ENCODE measurements at regions of chr10 and their contacts with region 1.

Region 1: DNA sequence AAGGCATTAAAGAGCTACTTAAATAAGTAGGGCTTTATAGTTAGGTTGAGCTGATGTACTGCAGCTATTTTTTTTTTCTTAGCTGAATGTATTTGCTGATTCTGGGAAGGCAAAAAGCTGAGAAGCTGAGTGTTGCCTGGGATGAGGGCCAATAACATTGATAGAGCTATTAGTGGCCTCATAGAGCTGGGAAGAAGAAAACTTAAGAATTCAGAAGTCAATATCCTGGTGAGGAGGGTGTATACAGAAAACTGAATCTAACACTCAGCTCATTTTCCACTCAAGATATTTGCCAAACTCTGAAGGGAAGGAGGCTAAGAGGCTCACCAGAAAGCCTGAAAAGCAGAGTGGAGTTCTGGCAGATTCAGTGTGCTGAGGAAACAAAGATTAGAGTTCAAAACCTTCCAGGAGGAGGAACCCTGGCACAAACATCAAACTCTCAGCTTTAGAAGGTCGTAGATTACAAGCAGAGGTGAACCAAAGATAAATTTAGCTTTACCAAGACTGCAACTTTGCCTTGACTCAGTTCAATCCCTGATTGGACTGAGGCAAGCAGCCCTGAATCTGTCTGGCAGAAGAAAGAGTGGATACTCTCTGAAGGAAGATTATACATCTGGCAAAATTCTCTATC is 11.3 kb downstream of the PPP1R3C start:
- DNase-seq: no peak
- H3K4me3 ChIP-seq: no peak overlapping the region
- H3K27ac ChIP-seq: no peak overlapping the region
- H3K4me1 ChIP-seq: peaks cover 18% of the 10 kb centered on the region
- H3K27me3 ChIP-seq: no peaks in the 10 kb centered on the region
- CTCF ChIP-seq: no peak

Region 2: DNA sequence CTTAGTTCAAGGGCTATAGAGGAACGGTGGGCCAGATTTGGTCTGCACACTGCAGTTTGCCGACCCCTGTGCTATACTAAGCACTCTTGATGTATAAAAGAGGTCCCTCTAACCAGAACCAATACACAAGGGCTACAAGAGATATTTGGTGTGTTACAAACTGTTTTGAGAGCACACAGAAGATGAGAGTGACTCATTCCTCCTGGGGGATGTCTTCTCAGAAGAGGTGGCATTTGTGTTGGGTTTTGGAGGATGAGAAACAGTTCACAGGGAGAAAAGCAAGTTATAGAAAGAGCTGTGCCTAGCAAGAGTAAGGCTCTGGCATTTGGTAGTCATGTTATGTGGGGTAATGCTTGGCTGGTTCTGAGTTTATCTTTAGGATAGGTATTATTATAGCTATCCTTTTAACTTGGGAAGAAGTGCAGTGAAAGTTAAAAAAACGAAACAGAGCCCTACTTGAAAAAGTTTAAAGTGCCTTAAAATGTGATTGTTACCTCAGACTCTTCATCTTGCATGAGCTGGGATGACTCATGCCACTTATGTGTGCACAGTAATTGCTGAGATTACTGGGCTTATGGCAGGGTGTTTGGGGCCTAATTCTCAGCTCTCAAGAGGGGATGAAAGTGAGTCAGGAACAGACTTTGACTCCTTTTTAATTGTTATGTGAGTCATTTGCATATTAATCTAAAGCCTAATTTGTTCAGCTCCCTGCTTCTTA is 1759.9 kb before region 1 on chr10:
- CTCF ChIA-PET with region 1: no interaction called
- POLR2A ChIA-PET with region 1: interaction called, 10 read pairs
- intact Hi-C with region 1: no loop called
- DNase-seq: peak in 1 of 2 experiments; percentile 42
- H3K4me3 ChIP-seq: no peak overlapping the region
- H3K27ac ChIP-seq: peak overlapping the region; percentile 57
- H3K4me1 ChIP-seq: peaks cover 8% of the 10 kb centered on the region; the same call in 1 of the 2 replicates
- H3K27me3 ChIP-seq: no peaks in the 10 kb centered on the region
- CTCF ChIP-seq: no peak

Region 3: DNA sequence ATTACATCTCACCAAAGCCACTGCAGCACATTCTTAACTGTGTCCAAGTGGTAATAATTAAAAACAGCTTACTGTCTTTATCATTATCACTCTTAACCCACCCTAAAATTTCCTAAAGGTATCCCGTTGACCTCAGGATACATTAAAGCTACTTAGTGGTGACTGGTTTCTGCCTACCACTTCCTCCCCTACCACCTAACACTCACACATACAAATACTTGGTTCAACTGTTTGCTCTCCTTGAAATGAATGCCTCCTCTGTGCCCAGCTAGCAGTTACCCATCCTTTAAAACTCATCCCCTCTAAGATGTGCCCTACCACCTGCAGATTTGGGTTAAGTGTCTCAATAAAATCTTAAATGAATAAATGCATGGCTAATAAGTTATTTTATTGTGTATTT is 394.0 kb before region 1 on chr10:
- CTCF ChIA-PET with region 1: no interaction called
- POLR2A ChIA-PET with region 1: no interaction called
- intact Hi-C with region 1: no loop called
- DNase-seq: no peak
- H3K4me3 ChIP-seq: no peak overlapping the region
- H3K27ac ChIP-seq: no peak overlapping the region
- H3K4me1 ChIP-seq: no peaks in the 10 kb centered on the region
- H3K27me3 ChIP-seq: no peaks in the 10 kb centered on the region
- CTCF ChIP-seq: no peak